CD4-positive, alpha-beta T cell (primary cell): ENCODE measurements at regions of chr1 and their contacts with region 1.

Region 1: GRCh38 chr1:37989361-37989930 is 376 bp downstream of the SF3A3 start:
- DNase-seq: peak in 11 of 14 experiments; percentile 22 to 66 (median 35)
- ATAC-seq: peak; percentile 50
- H3K4me3 ChIP-seq: peak overlapping the region; percentile 100
- H3K4me3 Mint-ChIP-seq: peak overlapping the region; percentile 100
- H3K27ac ChIP-seq: peak overlapping the region; percentile 64 to 72
- H3K27ac Mint-ChIP-seq: peak overlapping the region; percentile 79
- H3K4me1 ChIP-seq: peaks cover 27% of the 10 kb centered on the region
- H3K4me1 Mint-ChIP-seq: peaks cover 28% of the 10 kb centered on the region
- H3K27me3 ChIP-seq: no peaks in the 10 kb centered on the region
- H3K27me3 Mint-ChIP-seq: no peaks in the 10 kb centered on the region
- CTCF ChIP-seq: no peak

Region 2: DNA sequence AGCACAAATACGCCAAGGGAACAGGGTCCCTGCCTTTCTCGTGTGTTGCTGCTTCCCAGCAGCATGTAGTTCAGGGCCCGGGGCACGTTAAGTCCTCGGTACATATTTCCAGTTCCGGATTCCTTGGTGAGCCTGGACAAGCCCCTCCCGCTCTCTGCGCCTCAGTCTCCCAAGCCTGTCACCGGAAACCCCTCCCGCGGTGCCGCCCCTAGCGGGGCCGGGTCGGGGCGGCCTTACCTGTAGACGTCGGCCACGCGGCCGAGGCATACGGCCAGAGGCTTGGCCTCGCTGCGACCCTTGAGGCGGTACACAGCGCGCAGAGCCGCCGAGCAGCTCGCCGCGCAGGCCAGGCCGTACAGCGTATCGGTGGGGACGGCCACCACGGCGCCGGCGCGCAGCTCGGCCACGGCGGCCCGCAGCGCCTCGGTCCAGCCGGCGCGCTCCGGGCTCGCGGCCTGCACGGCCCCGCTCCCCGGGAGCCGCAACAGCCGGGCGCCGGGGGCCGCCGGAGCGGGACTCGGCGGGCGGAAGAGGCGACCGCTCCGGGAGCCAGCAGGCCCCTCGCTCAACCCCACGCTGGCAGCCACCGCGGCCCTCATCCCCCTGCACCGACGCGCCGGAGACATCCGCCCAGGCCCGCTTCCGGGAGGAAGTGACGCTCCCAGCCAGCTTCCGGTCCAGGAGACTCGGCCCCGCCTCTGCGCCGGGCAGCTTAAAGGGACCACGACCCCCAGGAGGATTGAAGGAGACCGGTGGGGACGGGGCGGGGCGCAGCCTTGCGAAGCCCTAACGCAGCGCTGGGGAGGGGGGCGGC is 181.7 kb before region 1 on chr1 and contains the starts of genes C1orf122 and YRDC:
- CTCF ChIA-PET with region 1: no interaction called
- POLR2A ChIA-PET with region 1: interaction called, 3 read pairs
- intact Hi-C with region 1: loop called in 1 of 2 experiments (anchors 2 kb)
- DNase-seq: peak; percentile 85 to 95 (median 90)
- ATAC-seq: peak; percentile 89
- H3K4me3 ChIP-seq: peak within 1 kb of the TSS; percentile 82
- H3K4me3 Mint-ChIP-seq: peak within 1 kb of the TSS; percentile 97
- H3K27ac ChIP-seq: peak within 1 kb of the TSS; percentile 85
- H3K27ac Mint-ChIP-seq: peak within 1 kb of the TSS; percentile 97
- H3K4me1 ChIP-seq: peaks cover 35% of the 10 kb centered on the region
- H3K4me1 Mint-ChIP-seq: peaks cover 44% of the 10 kb centered on the region
- H3K27me3 ChIP-seq: no peaks in the 10 kb centered on the region
- H3K27me3 Mint-ChIP-seq: no peaks in the 10 kb centered on the region
- CTCF ChIP-seq: no peak
- total RNA-seq, gene C1orf122: 10.9 to 13.2 TPM
- total RNA-seq, gene YRDC: 31.1 to 31.2 TPM

Region 3: GRCh38 chr1:37914719-37915475 is 74.5 kb before region 1 on chr1:
- CTCF ChIA-PET with region 1: no interaction called
- POLR2A ChIA-PET with region 1: no interaction called
- intact Hi-C with region 1: no loop called
- DNase-seq: no peak
- ATAC-seq: no peak
- H3K4me3 ChIP-seq: no peak overlapping the region
- H3K4me3 Mint-ChIP-seq: no peak overlapping the region
- H3K27ac ChIP-seq: no peak overlapping the region
- H3K27ac Mint-ChIP-seq: no peak overlapping the region
- H3K4me1 ChIP-seq: peaks cover 3% of the 10 kb centered on the region
- H3K4me1 Mint-ChIP-seq: peaks cover 7% of the 10 kb centered on the region
- H3K27me3 ChIP-seq: no peaks in the 10 kb centered on the region
- H3K27me3 Mint-ChIP-seq: no peaks in the 10 kb centered on the region
- CTCF ChIP-seq: no peak

Region 4: GRCh38 chr1:37931361-37932158 is 57.9 kb before region 1 on chr1:
- CTCF ChIA-PET with region 1: interaction called, 3 read pairs
- POLR2A ChIA-PET with region 1: interaction called, 3 read pairs
- intact Hi-C with region 1: loop called (anchors 2 to 5 kb)
- DNase-seq: peak; percentile 90 to 99 (median 97)
- ATAC-seq: peak; percentile 99
- H3K4me3 ChIP-seq: peak overlapping the region; percentile 93
- H3K4me3 Mint-ChIP-seq: peak overlapping the region; percentile 97
- H3K27ac ChIP-seq: peak overlapping the region; percentile 15 to 46
- H3K27ac Mint-ChIP-seq: peak overlapping the region; percentile 77
- H3K4me1 ChIP-seq: peaks cover 32% of the 10 kb centered on the region
- H3K4me1 Mint-ChIP-seq: peaks cover 38% of the 10 kb centered on the region
- H3K27me3 ChIP-seq: no peaks in the 10 kb centered on the region
- H3K27me3 Mint-ChIP-seq: no peaks in the 10 kb centered on the region
- CTCF ChIP-seq: no peak

Region 5: DNA sequence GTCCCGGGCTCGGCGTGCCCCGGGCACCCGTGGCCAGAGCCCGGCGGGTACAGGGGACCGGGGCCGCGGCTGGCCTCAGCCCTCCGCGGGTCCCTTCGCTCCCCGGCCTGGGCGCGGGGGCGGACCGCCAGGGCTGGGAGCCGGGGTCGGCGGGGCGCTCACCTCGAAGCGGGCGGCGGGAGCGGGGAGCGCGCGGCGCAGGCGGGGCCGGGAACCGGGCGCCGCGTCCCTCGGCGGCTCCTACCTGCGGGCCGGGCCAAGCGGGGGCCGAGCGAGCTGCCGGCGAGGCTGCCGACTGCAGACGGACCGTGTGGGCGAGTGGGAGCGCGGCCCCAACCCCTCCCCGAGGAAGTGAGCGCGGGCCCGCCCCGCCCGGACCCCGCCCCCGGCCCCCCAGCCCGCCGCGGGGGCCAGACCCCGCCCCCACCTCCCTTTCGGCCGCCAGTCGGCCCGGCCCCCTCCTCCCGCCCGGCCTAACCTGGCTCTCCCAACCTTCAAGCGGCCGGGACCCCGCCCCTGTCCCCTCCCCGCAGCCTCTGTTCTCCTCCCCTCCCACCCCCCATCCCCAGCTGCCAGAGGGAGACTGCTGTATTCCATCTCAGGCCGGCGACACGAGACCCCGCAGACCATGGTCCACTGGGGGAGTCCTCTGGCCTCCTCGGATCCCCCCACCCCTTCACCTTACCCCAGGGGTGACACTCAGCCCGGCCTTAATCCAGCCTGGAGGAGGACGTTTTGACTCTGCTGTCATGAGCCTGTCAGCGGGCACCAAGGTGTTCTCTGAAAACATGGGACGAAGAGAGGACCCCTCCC is 16.0 kb after region 1 on chr1 and contains the start of gene FHL3:
- CTCF ChIA-PET with region 1: interaction called, 6 read pairs
- POLR2A ChIA-PET with region 1: interaction called, 4 read pairs
- intact Hi-C with region 1: loop called in 1 of 2 experiments (anchors 2 kb)
- DNase-seq: peak in 8 of 14 experiments; percentile 21 to 76 (median 46)
- ATAC-seq: peak; percentile 45
- H3K4me3 ChIP-seq: peak within 1 kb of the TSS; percentile 60
- H3K4me3 Mint-ChIP-seq: peak within 1 kb of the TSS; percentile 85
- H3K27ac ChIP-seq: peak within 1 kb of the TSS in 1 of 2 donors; percentile 50
- H3K27ac Mint-ChIP-seq: peak within 1 kb of the TSS; percentile 62
- H3K4me1 ChIP-seq: peaks cover 54% of the 10 kb centered on the region
- H3K4me1 Mint-ChIP-seq: peaks cover 19% of the 10 kb centered on the region
- H3K27me3 ChIP-seq: peaks cover 0 to 5% of the 10 kb centered on the region in 2 experiments
- H3K27me3 Mint-ChIP-seq: peaks cover 4% of the 10 kb centered on the region
- CTCF ChIP-seq: no peak
- total RNA-seq, gene FHL3: 3.4 to 3.7 TPM

Region 6: DNA sequence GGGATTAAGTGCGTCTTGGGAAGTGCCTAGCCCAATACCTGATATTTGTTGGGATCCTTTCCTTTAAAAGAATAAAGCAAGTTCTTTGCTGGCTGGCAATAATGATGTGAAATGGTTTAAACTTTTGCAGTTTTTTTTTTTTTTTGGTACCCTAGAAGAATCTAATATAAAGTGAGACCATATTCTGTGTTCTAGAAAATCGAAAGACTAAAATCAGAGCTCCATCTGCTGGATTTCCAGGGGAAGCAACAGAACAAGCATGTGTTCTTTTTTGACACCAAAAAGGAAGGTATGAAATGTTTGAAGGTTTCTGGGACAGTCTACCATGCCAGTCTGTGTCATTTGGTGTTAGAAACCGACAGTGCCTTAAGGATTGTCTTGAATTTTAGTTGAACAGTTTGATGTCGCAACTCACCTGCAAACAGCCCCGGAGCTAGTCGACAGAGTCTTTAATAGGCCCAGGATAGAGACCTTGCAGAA is 29.5 kb after region 1 on chr1:
- CTCF ChIA-PET with region 1: interaction called, 16 read pairs
- POLR2A ChIA-PET with region 1: no interaction called
- intact Hi-C with region 1: loop called in 1 of 2 experiments (anchors 1 kb)
- DNase-seq: peak in 3 of 14 experiments; percentile 46 to 60 (median 58)
- ATAC-seq: peak; percentile 76
- H3K4me3 ChIP-seq: no peak overlapping the region
- H3K4me3 Mint-ChIP-seq: no peak overlapping the region
- H3K27ac ChIP-seq: no peak overlapping the region
- H3K27ac Mint-ChIP-seq: no peak overlapping the region
- H3K4me1 ChIP-seq: peaks cover 10% of the 10 kb centered on the region
- H3K4me1 Mint-ChIP-seq: peaks cover 17% of the 10 kb centered on the region
- H3K27me3 ChIP-seq: no peaks in the 10 kb centered on the region
- H3K27me3 Mint-ChIP-seq: no peaks in the 10 kb centered on the region
- CTCF ChIP-seq: peak; percentile 59

Region 7: DNA sequence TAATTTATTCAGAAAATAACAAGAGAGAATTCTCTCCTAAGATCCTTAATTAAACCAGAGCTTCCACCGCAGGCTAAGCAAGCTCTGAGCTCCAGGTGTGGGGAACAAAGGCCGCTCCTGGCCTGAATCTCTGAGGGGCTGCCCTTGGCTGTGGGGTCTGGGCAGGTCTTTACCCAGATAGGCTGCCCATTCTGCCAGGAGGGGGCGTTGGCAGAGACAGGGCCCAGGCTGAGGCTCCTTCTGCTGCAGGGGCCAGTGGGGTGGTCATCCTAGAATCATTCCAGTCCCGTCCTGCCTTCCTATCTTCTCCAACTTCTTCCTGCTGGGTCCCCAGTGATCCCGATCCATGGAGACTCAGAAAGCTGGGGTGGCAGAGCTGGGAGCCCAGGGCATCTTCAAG is 140.0 kb after region 1 on chr1:
- CTCF ChIA-PET with region 1: no interaction called
- POLR2A ChIA-PET with region 1: no interaction called
- intact Hi-C with region 1: no loop called
- DNase-seq: no peak
- ATAC-seq: no peak
- H3K4me3 ChIP-seq: no peak overlapping the region
- H3K4me3 Mint-ChIP-seq: no peak overlapping the region
- H3K27ac ChIP-seq: no peak overlapping the region
- H3K27ac Mint-ChIP-seq: no peak overlapping the region
- H3K4me1 ChIP-seq: no peaks in the 10 kb centered on the region
- H3K4me1 Mint-ChIP-seq: no peaks in the 10 kb centered on the region
- H3K27me3 ChIP-seq: peaks cover 13 to 32% of the 10 kb centered on the region in 2 experiments
- H3K27me3 Mint-ChIP-seq: peaks cover 54% of the 10 kb centered on the region
- CTCF ChIP-seq: no peak